Endothelial cell of umbilical vein (primary cell): ENCODE measurements at regions of chr16 and their contacts with region 1.

Region 1: DNA sequence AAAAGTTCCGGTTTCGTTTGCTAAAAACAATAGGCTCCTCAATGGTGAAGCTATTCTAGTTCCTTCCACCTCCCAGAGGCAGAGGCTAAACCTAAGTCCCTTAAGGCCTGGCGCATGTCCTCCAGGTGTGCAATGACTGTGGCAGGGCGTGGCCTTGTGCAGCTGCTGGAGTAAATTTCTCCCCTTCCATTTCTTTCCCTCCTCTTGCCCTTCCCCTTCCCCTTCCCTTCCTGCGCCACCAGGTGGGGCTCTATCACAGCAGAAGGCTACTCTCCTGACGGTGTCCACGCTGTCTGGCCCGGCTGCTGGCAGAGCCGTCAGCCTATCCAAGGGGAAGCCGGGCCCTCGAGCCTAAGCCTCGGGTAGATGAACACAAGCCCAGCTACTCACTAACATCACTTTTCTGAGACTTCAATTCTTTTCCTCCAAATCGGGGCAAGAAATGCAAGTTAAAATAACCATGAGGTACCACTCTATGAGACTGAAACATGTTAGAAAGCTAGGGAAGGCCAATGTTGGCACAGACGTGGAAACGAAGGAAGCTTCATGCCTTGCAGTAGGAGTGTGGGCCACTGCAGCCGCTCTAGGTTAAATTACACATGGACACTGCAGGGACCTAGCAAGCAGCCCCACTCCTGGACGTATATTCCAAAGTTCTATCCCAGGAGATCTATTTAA is 34.4 kb downstream of the C16orf78 start:
- DNase-seq: peak; percentile 72
- H3K4me3 ChIP-seq: no peak overlapping the region
- H3K27ac ChIP-seq: no peak overlapping the region
- H3K4me1 ChIP-seq: no peaks in the 10 kb centered on the region
- H3K27me3 ChIP-seq: no peaks in the 10 kb centered on the region
- CTCF ChIP-seq: peak; percentile 71 to 81
- POLR2A ChIP-seq: no peak

Region 2: DNA sequence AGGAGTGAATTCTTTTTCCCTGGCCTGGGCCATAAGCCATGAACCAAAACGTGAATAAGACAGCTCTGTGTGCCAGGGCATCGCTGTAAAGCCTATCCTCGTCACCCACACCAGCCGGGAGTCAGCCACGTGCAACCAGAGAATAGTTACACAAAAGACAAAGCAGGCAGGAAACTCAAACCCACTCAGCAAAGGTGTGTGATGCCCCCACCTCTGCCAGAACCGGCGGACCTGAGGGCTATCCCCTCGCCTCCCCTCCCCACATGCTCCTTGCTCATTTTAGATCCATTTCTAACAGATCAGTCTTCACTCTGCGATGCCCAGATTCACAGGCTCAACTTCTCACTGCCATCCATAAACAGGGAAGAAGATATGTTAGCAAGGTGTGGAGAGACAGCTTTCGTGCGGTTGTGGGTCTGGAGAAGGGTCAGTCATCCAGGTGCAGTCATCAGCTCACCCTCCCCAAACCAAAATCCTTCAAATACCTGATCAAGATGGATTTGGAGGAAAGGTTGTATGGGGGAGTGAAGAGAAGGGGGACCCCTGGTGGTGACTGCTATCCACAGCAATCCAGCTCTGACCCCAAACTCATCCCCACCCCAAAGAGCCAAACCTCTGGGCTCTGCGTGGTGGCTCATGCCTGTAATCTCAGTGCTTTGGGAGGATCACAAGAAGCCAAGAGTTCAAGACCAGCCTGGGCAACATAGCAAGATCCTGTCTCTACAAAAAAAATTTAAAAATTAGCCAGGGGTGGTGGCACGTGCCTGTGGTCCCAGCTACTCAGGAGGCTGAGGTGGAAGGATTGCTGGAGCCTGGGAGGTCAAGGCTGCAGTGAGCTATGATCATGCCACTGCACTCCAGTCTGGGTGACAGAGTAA is 184.8 kb after region 1 on chr16:
- CTCF ChIA-PET with region 1: interaction called, 17 read pairs
- POLR2A ChIA-PET with region 1: no interaction called
- dilution Hi-C with region 1: no loop called
- intact Hi-C with region 1: loop called (anchors 1 kb)
- DNase-seq: peak; percentile 33
- H3K4me3 ChIP-seq: no peak overlapping the region
- H3K27ac ChIP-seq: no peak overlapping the region
- H3K4me1 ChIP-seq: peaks cover 4% of the 10 kb centered on the region
- H3K27me3 ChIP-seq: no peaks in the 10 kb centered on the region
- CTCF ChIP-seq: peak; percentile 64 to 88
- POLR2A ChIP-seq: no peak

Region 3: GRCh38 chr16:49631187-49632041 is 223.4 kb after region 1 on chr16:
- CTCF ChIA-PET with region 1: no interaction called
- POLR2A ChIA-PET with region 1: no interaction called
- dilution Hi-C with region 1: no loop called
- intact Hi-C with region 1: no loop called
- DNase-seq: peak; percentile 19
- H3K4me3 ChIP-seq: no peak overlapping the region
- H3K27ac ChIP-seq: no peak overlapping the region
- H3K4me1 ChIP-seq: no peaks in the 10 kb centered on the region
- H3K27me3 ChIP-seq: no peaks in the 10 kb centered on the region
- CTCF ChIP-seq: no peak
- POLR2A ChIP-seq: no peak

Region 4: DNA sequence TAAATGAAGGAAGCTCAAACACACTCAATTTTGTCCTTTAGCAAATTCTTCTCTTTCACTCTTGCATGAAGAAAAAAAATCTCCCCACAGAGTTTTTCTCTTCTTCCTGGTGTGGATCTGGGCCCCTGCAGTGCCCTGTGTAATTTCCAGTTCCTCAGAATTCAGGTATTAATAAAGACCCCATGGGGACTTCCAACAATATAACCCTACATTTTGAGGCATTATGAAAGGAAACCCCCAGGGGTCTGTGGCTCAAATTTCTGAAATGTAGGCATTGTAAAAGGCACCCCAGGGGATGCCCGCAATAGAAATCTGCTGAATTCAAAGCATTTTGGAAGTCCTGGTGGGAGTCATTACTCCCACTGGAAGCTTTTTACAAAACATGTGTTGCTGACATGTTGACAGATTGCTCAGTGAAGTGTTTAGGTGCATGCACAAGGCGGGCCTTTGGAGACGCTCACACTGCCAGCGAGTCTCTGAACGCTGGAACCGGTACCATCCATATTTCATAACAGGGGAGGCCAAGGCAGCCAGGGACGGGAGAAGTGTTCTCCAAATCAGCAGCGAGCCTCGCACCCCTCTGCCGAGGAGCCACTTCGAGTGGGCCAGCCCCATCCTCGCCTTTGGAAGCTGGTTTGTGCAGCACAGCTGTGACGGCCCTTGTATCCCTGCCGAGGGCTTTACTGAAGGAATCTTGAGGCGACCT is 293.9 kb after region 1 on chr16:
- CTCF ChIA-PET with region 1: interaction called, 3 read pairs
- POLR2A ChIA-PET with region 1: no interaction called
- dilution Hi-C with region 1: no loop called
- intact Hi-C with region 1: loop called (anchors 1 kb)
- DNase-seq: no peak
- H3K4me3 ChIP-seq: no peak overlapping the region
- H3K27ac ChIP-seq: no peak overlapping the region
- H3K4me1 ChIP-seq: no peaks in the 10 kb centered on the region
- H3K27me3 ChIP-seq: peaks cover 11 to 15% of the 10 kb centered on the region in 2 experiments
- CTCF ChIP-seq: no peak
- POLR2A ChIP-seq: no peak

Region 5: DNA sequence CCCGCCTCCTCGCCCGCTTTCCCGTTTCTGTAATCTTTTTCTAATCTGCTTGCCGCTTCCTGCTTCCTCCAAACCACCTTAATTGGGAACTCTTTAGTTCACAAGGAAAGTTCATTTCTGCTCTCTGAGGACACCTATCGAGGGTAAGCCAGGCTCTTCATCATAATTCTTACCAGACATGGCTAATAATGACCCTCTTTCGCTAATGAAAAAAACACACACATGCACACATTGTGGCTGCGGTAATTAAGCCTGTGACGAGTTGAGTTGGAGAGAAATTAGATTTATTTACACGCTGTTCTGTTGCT is 347.3 kb after region 1 on chr16:
- CTCF ChIA-PET with region 1: no interaction called
- POLR2A ChIA-PET with region 1: no interaction called
- dilution Hi-C with region 1: no loop called
- intact Hi-C with region 1: loop called (anchors 10 kb)
- DNase-seq: peak; percentile 63
- H3K4me3 ChIP-seq: peak overlapping the region in 2 of 3 experiments; percentile 16 to 18
- H3K27ac ChIP-seq: no peak overlapping the region
- H3K4me1 ChIP-seq: peaks cover 12% of the 10 kb centered on the region
- H3K27me3 ChIP-seq: no peaks in the 10 kb centered on the region
- CTCF ChIP-seq: peak; percentile 26 to 46
- POLR2A ChIP-seq: no peak

Region 6: DNA sequence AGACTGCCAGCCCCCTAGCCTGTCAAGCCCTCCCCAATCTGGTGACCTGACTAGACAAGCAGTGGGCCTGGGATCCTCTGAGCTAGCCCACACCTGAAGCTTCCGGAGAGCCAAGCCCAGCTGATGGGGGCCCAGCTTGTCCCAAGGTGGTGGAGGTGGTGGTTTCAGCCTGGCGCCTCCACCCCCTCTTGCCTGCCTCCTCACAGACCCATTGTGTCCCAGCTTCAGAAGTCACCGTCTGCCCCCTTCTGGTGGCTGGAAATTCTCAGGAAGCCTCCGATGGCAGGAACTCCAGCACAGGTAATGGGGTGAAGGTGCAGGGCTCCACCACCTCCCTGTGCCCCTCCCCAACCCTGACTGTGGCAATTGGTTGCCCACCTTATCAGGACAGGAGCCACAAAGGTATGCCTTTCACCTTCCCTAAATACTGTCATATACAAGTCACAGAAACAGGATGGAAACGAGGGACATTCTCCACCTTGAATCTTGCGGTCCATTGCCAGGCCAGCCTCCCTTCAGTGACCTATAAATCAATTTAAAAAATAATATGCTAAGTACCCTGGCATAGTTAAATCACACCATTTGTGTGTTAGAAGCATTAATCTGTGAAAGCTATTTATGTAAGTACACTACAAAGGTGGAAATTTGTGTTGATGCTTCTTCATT is 513.9 kb after region 1 on chr16:
- CTCF ChIA-PET with region 1: interaction called, 43 read pairs
- POLR2A ChIA-PET with region 1: no interaction called
- dilution Hi-C with region 1: no loop called
- intact Hi-C with region 1: loop called (anchors 1 kb)
- DNase-seq: peak; percentile 52
- H3K4me3 ChIP-seq: no peak overlapping the region
- H3K27ac ChIP-seq: no peak overlapping the region
- H3K4me1 ChIP-seq: no peaks in the 10 kb centered on the region
- H3K27me3 ChIP-seq: no peaks in the 10 kb centered on the region
- CTCF ChIP-seq: peak; percentile 46 to 72
- POLR2A ChIP-seq: no peak